Activated B cell treated with CpG ODN at 0.5 μM for 24 hours (primary cell): ENCODE measurements at regions of chr17 and their contacts with region 1.

Region 1: GRCh38 chr17:7306911-7307686 is at the start of gene EIF5A:
- DNase-seq: peak; percentile 98
- ATAC-seq: peak; percentile 72
- H3K4me3 Mint-ChIP-seq: peak within 1 kb of the TSS; percentile 96
- H3K27ac Mint-ChIP-seq: peak within 1 kb of the TSS; percentile 99
- H3K4me1 Mint-ChIP-seq: peaks cover 38% of the 10 kb centered on the region
- H3K27me3 Mint-ChIP-seq: no peaks in the 10 kb centered on the region
- CTCF ChIP-seq: no peak
- total RNA-seq, gene EIF5A: 656 and 664 TPM in 2 replicates

Region 2: GRCh38 chr17:7204828-7205461 is 102.2 kb before region 1 on chr17:
- CTCF ChIA-PET with region 1: no interaction called
- POLR2A ChIA-PET with region 1: interaction called, 3 read pairs
- intact Hi-C with region 1: loop called (anchors 2 kb)
- DNase-seq: peak; percentile 95
- ATAC-seq: peak; percentile 88
- H3K4me3 Mint-ChIP-seq: peak overlapping the region; percentile 87
- H3K27ac Mint-ChIP-seq: peak overlapping the region; percentile 94
- H3K4me1 Mint-ChIP-seq: peaks cover 30% of the 10 kb centered on the region
- H3K27me3 Mint-ChIP-seq: no peaks in the 10 kb centered on the region
- CTCF ChIP-seq: no peak

Region 3: DNA sequence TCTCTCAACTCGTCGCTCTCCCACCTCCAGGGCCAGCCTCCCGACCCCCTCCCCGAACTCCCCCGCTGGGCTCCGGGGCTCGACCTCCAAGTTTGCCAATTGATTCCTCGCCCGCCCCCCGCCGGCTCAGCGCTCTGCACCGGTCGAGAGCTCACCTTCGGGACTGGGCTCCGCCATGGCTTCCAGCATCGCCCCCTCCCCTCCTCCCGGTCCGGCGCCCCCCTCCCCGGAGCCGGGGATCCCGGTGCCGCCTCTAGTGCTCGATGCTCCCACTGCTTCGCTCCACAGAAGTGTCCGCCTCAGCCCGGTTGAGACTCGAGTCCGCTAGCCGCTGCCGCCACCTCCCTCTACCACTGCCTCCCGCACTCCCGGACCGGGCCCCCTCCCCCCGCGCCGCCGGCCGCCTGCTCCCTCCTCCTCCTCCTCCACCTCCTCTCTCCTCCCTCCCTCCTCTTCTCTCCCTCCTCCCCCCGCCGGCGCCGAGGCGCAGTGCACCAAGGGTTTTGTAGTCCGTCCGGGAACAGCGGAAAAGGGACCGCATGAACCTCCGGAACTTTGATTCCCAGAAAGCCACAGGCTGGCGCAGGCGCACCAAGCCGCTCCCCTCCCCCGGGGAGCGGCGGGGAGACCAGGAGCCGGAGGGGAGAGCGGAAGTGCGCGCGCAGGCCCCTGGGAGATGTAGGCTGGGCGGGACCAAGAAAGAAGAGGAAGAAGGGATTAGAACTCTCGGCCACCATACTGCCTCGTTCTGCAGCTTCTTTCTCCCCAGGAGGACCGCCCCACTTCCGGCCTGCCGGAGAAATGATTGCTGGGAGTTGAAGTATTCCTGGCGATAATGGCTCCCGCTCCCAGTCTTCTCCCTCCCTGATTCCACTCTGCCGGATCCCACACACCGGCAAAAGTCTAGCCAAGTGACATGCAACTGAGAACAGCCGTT is 67.7 kb before region 1 on chr17 and contains the start of gene PHF23:
- CTCF ChIA-PET with region 1: no interaction called
- POLR2A ChIA-PET with region 1: interaction called, 12 read pairs
- intact Hi-C with region 1: loop called (anchors 1 kb)
- DNase-seq: peak; percentile 93
- ATAC-seq: peak; percentile 64
- H3K4me3 Mint-ChIP-seq: peak within 1 kb of the TSS; percentile 99
- H3K27ac Mint-ChIP-seq: peak within 1 kb of the TSS; percentile 100
- H3K4me1 Mint-ChIP-seq: peaks cover 63% of the 10 kb centered on the region
- H3K27me3 Mint-ChIP-seq: no peaks in the 10 kb centered on the region
- CTCF ChIP-seq: no peak
- total RNA-seq, gene PHF23: 45.5 and 46.6 TPM in 2 replicates

Region 4: GRCh38 chr17:7280519-7281429 is 26.3 kb before region 1 on chr17:
- CTCF ChIA-PET with region 1: interaction called, 4 read pairs
- POLR2A ChIA-PET with region 1: interaction called, 12 read pairs
- intact Hi-C with region 1: loop called (anchors 1 kb)
- DNase-seq: peak; percentile 82
- ATAC-seq: peak; percentile 83
- H3K4me3 Mint-ChIP-seq: peak overlapping the region; percentile 82
- H3K27ac Mint-ChIP-seq: peak overlapping the region; percentile 77
- H3K4me1 Mint-ChIP-seq: peaks cover 14% of the 10 kb centered on the region
- H3K27me3 Mint-ChIP-seq: peaks cover 12% of the 10 kb centered on the region
- CTCF ChIP-seq: peak; percentile 42

Region 5: GRCh38 chr17:7329374-7329996 is 22.4 kb after region 1 on chr17:
- CTCF ChIA-PET with region 1: no interaction called
- POLR2A ChIA-PET with region 1: interaction called, 62 read pairs
- intact Hi-C with region 1: loop called (anchors 1 kb)
- DNase-seq: peak; percentile 92
- ATAC-seq: peak; percentile 74
- H3K4me3 Mint-ChIP-seq: peak overlapping the region; percentile 95
- H3K27ac Mint-ChIP-seq: peak overlapping the region; percentile 96
- H3K4me1 Mint-ChIP-seq: peaks cover 41% of the 10 kb centered on the region
- H3K27me3 Mint-ChIP-seq: no peaks in the 10 kb centered on the region
- CTCF ChIP-seq: no peak

Region 6: GRCh38 chr17:7403977-7404736 is 97.1 kb after region 1 on chr17 and contains the start of gene TMEM256:
- CTCF ChIA-PET with region 1: no interaction called
- POLR2A ChIA-PET with region 1: interaction called, 7 read pairs
- intact Hi-C with region 1: loop called (anchors 1 kb)
- DNase-seq: peak; percentile 82
- ATAC-seq: peak; percentile 89
- H3K4me3 Mint-ChIP-seq: peak within 1 kb of the TSS; percentile 97
- H3K27ac Mint-ChIP-seq: peak within 1 kb of the TSS; percentile 94
- H3K4me1 Mint-ChIP-seq: peaks cover 16% of the 10 kb centered on the region
- H3K27me3 Mint-ChIP-seq: peaks cover 12% of the 10 kb centered on the region
- CTCF ChIP-seq: no peak
- total RNA-seq, gene TMEM256: 98.2 and 117 TPM in 2 replicates

Region 7: GRCh38 chr17:7572588-7573323 is 265.7 kb after region 1 on chr17:
- CTCF ChIA-PET with region 1: no interaction called
- POLR2A ChIA-PET with region 1: interaction called, 4 read pairs
- intact Hi-C with region 1: loop called (anchors 1 kb)
- DNase-seq: peak; percentile 100
- ATAC-seq: no peak
- H3K4me3 Mint-ChIP-seq: peak overlapping the region; percentile 98
- H3K27ac Mint-ChIP-seq: peak overlapping the region; percentile 99
- H3K4me1 Mint-ChIP-seq: peaks cover 48% of the 10 kb centered on the region
- H3K27me3 Mint-ChIP-seq: no peaks in the 10 kb centered on the region
- CTCF ChIP-seq: no peak